ENCODE measurements at regions of chr1 and their contacts with region 1.

Region 1: GRCh38 chr1:23634842-23635651 is 56.6 kb upstream of the RPL11 start:
- DNase-seq: peak; percentile 77 to 86
- ATAC-seq: peak; percentile 77 to 80
- H3K4me3 ChIP-seq: peak overlapping the region; percentile 37
- H3K27ac ChIP-seq: peak overlapping the region; percentile 91 to 95
- H3K4me1 ChIP-seq: peaks cover 40% of the 10 kb centered on the region
- CTCF ChIP-seq: peak; percentile 70
- EP300 ChIP-seq: no peak
- POLR2A ChIP-seq: no peak
- RAD21 ChIP-seq: peak; percentile 78 to 81

Region 2: GRCh38 chr1:23496490-23497181 is 138.4 kb before region 1 on chr1:
- CTCF ChIA-PET with region 1: interaction called, 51 read pairs
- POLR2A ChIA-PET with region 1: no interaction called
- DNase-seq: no peak
- ATAC-seq: peak; percentile 55 to 70; a peak in 5 of 6 replicates
- H3K4me3 ChIP-seq: no peak overlapping the region
- H3K27ac ChIP-seq: no peak overlapping the region
- H3K4me1 ChIP-seq: no peaks in the 10 kb centered on the region
- CTCF ChIP-seq: no peak
- EP300 ChIP-seq: no peak
- POLR2A ChIP-seq: no peak
- RAD21 ChIP-seq: no peak

Region 3: GRCh38 chr1:23559136-23559984 is 75.7 kb before region 1 on chr1 and contains the start of gene ID3:
- CTCF ChIA-PET with region 1: interaction called, 699 read pairs
- POLR2A ChIA-PET with region 1: interaction called, 29 read pairs
- DNase-seq: peak; percentile 54 to 95
- ATAC-seq: peak; percentile 24 to 47
- H3K4me3 ChIP-seq: peak within 1 kb of the TSS; percentile 92
- H3K27ac ChIP-seq: peak within 1 kb of the TSS; percentile 96 to 98
- H3K4me1 ChIP-seq: peaks cover 61% of the 10 kb centered on the region
- CTCF ChIP-seq: no peak
- EP300 ChIP-seq: no peak
- POLR2A ChIP-seq: peak; percentile 96
- RAD21 ChIP-seq: no peak; a peak in 2 of 5 replicates
- polyA plus RNA-seq, gene ID3: 171 and 193 TPM in 2 replicates

Region 4: DNA sequence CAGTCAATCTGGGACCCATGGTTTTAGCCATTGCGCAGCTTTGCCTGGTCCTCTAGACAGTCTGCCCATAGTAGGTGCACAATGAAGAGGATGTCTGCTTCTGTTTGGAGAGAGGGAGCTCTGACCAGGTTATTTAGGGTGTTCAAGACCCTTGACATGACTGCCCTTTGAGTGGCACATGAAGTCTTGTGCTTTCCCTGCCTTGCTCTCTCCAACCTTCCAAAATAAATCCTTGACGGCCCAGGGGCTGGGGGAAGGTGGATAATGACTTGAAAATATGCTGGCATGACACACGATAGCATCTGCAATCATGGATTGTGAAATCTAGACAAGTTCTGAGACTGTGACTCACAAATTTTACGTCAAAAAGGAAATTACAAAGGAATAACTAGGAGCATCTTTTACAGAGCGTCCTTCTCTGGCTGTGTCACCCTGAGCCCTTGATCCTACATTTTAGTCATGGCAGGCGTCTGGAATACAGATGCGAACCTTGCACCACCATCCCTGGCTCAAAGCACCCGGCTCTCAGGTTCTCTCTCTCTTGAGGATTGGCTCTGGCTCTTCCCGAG is 49.5 kb before region 1 on chr1:
- CTCF ChIA-PET with region 1: interaction called, 143 read pairs
- POLR2A ChIA-PET with region 1: no interaction called
- DNase-seq: peak; percentile 81 to 96
- ATAC-seq: peak; percentile 92 to 93
- H3K4me3 ChIP-seq: no peak overlapping the region
- H3K27ac ChIP-seq: peak overlapping the region; percentile 96 to 100
- H3K4me1 ChIP-seq: peaks cover 79% of the 10 kb centered on the region
- CTCF ChIP-seq: no peak
- EP300 ChIP-seq: peak; percentile 99
- POLR2A ChIP-seq: no peak
- RAD21 ChIP-seq: peak; percentile 36 to 63

Region 5: DNA sequence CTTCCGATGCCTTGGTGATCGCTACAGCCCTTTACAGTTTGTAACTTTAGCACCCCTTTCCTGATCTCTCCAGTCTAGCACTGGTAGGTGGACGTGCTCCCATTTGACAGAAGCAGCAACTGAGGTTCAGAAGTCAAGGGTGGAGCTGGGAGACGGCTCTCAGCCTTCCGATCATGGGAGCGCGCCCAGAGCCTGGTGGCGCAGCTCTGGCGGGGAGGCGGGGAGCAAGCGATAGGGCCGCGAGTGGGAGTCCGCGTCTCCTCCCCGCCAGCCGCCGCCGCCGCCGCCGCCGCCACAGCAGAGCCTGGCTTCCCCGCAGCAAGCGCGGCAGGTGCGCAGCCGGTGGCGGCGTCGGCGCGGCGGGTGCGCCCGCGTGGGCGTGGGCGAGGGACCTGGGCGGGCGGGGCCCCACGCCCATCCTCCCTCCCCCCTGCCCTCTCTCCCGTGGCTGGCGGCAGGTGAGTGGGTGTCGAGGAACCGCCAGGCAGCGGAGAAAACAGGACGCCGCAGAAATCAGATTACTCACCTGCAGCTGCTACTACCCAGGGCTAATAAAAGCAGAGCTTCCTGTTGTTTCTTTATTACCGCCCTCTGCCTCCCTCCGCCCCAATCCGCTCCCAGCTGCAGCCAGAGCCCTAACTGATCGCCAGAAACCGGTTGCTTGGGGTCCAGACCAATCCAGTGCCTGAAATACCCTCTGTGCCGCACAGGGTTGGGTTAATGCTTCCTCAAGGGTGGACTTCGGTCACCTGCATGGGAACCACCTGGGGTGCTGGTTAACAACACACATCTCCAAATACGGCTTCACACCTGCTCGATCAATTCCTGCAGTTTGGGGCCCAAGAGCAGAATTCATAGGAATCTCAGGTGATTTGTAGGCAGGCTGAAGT is 15.5 kb before region 1 on chr1:
- CTCF ChIA-PET with region 1: interaction called, 12 read pairs
- POLR2A ChIA-PET with region 1: no interaction called
- DNase-seq: no peak
- ATAC-seq: 0 out of 6 replicates have a peak, but pooled peaks of 1 of the 2 experiments have one; percentile 41
- H3K4me3 ChIP-seq: peak overlapping the region; percentile 33
- H3K27ac ChIP-seq: peak overlapping the region in 1 of 2 experiments; percentile 78; a peak in 3 of 6 replicates
- H3K4me1 ChIP-seq: no peaks in the 10 kb centered on the region
- CTCF ChIP-seq: no peak
- EP300 ChIP-seq: no peak
- POLR2A ChIP-seq: no peak
- RAD21 ChIP-seq: no peak

Region 6: DNA sequence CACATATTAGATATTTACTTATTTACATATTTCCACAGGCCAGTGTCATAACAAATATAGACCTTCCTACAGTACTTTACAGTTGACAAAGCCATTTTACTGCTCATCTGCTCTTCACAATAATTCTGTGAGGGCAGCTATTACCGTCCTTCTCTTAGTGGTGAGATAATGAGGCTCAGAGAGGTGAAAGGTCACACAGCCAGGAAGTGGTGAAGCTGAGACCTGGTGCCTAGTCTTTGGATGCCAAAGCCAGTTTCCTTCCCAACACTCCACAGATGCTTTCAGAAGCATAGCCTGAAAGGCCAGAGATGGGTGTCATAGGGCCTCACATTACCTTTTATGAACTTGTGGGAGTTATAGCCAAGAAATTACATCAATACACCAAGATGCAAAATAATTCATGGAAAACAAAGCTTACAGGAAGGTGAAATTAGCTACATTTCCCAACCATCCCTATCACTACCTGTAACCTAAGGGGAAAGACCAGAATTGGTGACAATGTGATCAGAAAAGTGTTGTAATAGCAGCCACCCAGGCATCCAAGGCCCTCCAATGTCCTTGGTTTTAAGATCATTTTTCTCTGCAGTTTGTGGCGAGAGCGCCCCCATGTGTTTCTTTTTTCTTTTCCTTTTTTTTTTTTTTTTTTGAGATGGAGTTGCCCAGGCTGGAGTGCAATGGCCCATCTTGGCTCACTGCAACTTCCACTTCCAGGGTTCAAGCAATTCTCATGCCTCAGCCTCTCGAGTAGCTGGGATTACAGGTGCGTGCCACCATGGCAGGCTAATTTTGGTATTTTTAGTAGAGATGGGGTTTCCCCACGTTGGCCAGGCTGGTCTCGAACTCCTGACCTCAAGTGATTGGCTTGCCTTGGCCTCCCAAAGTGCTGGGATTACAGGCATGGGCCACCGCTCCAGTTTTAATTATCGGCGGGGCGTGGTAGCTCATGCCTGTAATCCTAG is 30.1 kb after region 1 on chr1:
- CTCF ChIA-PET with region 1: interaction called, 17 read pairs
- POLR2A ChIA-PET with region 1: no interaction called
- DNase-seq: peak in 1 of 2 experiments; percentile 31
- ATAC-seq: peak in 1 of 2 experiments; percentile 59; a peak in 2 of 6 replicates
- H3K4me3 ChIP-seq: no peak overlapping the region
- H3K27ac ChIP-seq: no peak overlapping the region
- H3K4me1 ChIP-seq: no peaks in the 10 kb centered on the region
- CTCF ChIP-seq: peak; percentile 40
- EP300 ChIP-seq: no peak
- POLR2A ChIP-seq: no peak
- RAD21 ChIP-seq: peak; percentile 36 to 59; a peak in 4 of 5 replicates

Measured in A549 (cell line).